ENCODE measurements at regions of chr13 and their contacts with region 1.

Region 1: DNA sequence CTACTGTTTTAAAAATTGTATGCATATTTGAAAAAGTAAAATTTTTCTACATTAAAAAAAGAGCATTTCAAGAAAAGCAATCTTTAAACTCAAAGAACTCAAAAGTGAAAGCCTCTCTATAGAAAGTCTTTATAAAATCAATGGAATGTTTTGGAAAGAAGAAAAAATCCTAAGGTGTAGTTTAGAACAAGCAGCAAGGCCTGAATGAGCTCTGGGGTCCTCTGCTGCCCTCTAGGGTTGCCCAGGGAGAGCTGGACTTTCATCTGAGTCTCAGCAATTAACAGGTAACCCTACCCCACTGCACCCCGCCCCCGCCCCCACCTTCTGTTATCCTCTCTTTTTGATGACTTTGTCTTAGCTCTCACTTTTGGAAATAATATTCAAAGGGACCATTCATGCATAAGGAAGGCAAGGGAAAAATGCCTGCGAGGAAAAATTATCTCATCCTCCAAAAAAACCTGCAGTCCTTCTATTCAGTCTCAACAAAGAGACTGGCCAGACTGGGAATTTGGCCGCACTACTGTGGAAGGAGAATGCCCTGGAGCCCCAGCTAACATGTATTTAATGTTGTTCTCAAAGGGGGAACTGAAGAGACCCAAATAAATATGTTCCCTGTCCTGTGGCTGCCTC is 24.1 kb downstream of the SLC25A30 start:
- DNase-seq: no peak
- H3K4me3 ChIP-seq: no peak overlapping the region
- CTCF ChIP-seq: peak; percentile 76

Region 2: DNA sequence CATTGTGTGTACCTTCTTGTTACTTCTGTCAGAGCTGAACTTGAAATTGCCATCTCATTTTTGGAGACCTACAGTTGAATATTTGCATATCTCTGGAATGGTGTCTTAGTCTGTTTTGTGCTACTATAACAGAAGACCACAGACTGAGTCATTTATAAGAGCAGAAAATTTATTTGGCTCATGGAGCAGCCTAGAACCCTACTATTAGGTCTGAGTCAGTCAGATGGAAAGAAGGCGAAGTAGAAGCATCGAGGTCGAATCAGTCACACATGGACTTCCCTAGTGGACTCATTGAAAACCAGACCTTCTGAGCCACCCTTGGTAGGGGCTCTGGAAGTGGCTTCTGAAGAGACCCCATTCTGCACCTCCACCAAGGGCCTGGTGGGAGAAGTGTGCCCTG is 19.1 kb before region 1 on chr13:
- CTCF ChIA-PET with region 1: interaction called, 135 read pairs
- POLR2A ChIA-PET with region 1: no interaction called
- DNase-seq: no peak
- H3K4me3 ChIP-seq: no peak overlapping the region
- CTCF ChIP-seq: no peak

Region 3: DNA sequence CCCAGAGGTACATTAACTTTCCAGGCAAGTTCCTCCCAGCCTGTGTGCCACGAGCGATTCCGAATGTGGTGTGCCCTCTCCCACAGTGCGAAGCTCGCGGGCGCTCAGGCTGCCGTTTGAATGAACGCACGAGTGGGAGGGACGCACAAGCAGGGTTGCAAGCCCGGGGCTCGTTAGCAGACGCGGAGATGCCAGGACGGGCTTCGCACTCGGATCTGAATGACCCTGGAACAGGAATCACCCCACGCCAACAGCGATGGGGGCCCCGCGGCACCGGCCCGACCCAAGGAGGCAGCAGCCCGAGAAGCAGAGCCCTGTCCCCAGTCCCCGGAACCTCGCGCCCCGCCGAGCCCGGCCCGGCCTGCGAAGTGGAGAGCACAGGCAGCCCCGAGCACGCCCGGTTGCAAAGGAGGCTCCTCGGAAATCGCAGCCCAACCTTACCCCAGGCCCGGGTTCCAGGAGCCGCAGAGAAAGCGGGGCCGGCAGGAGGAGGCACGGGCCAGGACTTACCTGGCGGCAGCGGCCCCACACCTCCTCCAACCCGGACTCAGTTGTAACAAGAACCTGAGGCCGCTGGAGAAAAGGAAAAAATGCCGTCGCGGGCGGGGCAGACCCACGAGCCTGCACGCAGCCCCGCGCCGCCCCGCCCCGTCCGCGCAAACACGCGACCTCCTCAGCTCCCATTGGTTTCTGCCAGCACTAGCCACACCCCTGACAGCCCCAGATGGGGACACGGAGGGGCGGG is 23.9 kb after region 1 on chr13 and contains the start of gene SLC25A30:
- CTCF ChIA-PET with region 1: interaction called, 71 read pairs
- POLR2A ChIA-PET with region 1: interaction called, 3 read pairs
- DNase-seq: no peak
- H3K4me3 ChIP-seq: peak within 1 kb of the TSS; percentile 77
- CTCF ChIP-seq: no peak

Region 4: GRCh38 chr13:45584816-45585215 is 190.8 kb after region 1 on chr13:
- CTCF ChIA-PET with region 1: no interaction called
- POLR2A ChIA-PET with region 1: no interaction called
- DNase-seq: no peak
- H3K4me3 ChIP-seq: no peak overlapping the region
- CTCF ChIP-seq: no peak

Region 5: DNA sequence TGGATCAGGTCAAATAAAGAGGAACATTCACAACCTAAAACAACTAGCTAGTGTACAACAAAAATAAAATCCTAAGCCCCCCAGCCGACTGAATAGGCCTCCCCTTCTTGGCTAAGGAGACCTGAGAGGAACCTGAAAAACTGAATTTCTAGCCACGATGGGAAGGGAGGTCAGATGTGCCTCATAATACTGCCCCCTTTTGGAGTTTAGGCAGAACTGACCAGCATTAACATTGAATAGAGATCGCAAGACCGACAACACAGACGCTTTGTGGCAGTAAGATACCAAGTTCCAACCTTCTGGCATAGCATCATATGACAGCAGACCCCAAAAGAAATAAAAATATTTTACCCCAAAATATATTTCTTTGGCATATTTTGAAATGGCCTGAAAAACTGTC is 324.0 kb after region 1 on chr13:
- CTCF ChIA-PET with region 1: no interaction called
- POLR2A ChIA-PET with region 1: no interaction called
- DNase-seq: no peak
- H3K4me3 ChIP-seq: no peak overlapping the region
- CTCF ChIP-seq: peak; percentile 58

Measured in AG04449 (cell line).